Left cardiac atrium (tissue), 4 donors: ENCODE measurements at regions of chr20 and their contacts with region 1.

Region 1: DNA sequence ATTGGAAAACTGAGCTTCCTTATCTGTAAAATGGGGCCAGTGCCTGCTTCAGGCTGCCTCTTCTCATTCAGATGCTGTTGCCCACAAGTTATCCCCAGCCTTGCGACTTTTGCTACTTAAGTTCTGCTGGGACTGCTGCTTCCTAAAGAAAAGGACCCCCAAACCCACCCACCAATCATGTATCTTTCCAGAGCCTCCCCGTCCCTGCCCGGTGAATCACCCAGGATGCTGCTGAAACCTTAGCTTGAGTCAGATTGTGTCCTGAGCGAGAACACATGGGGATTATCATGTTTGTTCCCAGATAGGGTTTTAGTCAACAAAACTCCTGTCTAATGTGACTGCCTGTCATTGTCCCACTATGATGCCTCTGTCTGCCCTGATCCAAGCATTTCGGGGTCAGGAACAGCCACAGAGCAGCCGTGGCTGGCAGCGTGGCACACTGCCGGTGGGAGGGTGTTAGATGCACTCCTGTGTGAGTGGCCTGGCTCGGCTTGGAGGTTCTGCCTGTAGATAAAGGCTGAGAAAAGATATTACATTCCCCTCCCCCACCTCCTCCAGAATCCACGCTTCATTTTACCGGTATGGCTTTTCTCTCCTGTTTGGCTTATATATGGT is 79.9 kb downstream of the TOX2 start:
- DNase-seq: peak; percentile 38
- ATAC-seq: peak; percentile 44 to 84

Region 2: DNA sequence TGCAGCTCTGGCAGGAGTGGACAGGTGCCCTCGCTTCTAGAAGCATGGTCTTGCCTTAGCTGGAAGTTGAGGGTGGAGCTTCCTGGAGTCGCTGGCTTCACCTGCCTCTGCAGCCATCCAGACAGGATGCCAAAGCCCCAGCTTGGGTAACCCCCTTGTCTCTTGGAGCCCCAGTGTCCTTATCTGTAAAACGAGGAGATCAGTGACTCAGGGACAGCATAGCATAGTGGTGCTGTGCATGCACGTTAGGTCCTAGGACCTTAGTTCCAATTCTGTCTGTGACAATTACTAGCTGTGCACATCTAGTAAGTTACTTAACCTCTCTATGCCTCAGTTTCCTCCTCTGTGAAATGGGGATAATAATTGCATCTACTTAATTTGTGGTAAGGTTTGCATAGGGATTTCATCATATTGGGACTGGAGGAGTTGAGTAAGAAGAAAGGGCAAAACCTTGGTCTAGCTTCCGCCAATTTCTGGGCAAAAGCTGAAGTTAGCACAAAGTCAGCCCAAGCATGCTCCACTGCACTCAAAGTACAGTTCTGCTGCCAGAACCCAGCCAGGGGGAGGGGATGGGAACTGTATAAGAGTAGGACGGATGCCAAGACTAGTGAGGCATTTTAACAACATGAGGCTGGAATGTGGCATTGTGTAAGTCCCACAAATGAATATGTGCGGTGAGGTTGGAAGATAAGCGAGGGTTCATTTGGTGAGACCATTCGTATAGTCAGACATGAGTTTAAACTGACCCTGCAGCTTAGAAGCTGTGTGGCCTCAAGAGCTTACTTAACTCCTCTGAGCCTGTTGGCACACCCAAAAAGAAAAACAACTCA is 55.4 kb before region 1 on chr20:
- intact Hi-C with region 1: loop called in 1 of 2 experiments (anchors 10 kb)
- DNase-seq: peak; percentile 56
- ATAC-seq: peak; percentile 82 to 85